Left colon (tissue), 2 donors: ENCODE measurements at regions of chr16 and their contacts with region 1.

Region 1: GRCh38 chr16:85234310-85235204 is 122.3 kb upstream of the CIBAR2 start:
- DNase-seq: peak; percentile 46 to 56
- ATAC-seq: peak; percentile 66

Region 2: DNA sequence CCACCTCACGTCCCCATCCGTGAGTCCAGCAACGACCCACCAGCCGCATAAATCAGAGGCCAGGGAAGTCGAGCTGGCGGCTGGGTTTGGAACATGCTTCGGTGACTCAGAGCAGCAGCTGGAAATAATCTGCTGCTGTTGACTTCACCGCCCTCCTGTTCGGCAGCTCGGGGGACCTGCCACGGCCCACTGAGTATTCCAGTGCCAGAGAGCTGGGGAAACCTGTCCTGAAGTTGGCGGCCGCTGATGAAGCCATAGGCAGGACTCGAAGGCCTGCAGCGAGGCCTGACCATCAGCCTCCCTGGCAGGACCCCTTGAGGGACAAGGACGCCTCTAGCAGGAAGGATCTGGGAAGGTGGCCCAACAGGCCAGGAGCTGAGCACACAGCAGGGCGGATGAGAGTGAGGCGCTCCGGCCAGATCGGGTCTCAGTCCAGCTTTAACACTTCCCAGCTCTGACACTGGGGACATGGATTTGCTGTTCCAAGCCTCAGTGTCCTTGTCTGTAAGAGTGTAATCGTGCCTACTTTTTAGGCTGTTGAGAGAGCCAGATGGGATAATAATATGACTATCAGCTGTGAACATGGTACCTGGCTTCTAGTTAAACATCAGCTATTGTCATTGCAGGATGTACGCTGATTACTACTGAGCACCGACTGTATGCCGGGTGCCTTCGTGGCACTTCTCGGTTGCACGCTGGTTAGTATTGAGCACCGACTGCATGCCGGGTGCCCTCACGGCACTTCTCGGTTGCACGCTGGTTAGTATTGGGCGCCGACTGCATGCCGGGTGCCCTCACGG is 71.9 kb before region 1 on chr16:
- intact Hi-C with region 1: loop called in 1 of 2 experiments (anchors 5 kb)
- DNase-seq: peak in 1 of 2 donors; percentile 53
- ATAC-seq: peak; percentile 19

Region 3: DNA sequence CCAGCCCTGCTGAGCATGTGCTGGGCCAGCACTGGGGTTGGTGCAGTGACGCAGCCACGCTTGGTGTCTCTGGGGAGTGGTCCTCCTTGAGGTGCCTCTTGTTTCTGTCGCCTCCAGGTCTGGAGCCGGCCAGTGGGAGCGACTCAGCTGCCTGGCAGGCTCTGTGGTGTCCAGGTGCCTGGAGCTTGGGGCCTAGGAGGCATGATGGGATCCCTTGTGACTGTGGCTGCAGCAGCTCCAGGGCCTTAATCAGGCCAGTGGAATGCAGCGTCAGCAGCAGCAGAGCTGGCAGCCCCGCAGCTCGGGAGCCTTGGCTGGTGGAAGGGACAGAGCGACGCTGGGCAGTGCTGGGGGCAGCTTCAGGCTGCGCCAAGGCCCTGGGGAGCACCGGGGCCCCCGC is 47.6 kb before region 1 on chr16:
- intact Hi-C with region 1: no loop called
- DNase-seq: no peak
- ATAC-seq: no peak